Esophagus squamous epithelium (tissue), 5 donors: ENCODE measurements at regions of chr3 and their contacts with region 1.

Region 1: DNA sequence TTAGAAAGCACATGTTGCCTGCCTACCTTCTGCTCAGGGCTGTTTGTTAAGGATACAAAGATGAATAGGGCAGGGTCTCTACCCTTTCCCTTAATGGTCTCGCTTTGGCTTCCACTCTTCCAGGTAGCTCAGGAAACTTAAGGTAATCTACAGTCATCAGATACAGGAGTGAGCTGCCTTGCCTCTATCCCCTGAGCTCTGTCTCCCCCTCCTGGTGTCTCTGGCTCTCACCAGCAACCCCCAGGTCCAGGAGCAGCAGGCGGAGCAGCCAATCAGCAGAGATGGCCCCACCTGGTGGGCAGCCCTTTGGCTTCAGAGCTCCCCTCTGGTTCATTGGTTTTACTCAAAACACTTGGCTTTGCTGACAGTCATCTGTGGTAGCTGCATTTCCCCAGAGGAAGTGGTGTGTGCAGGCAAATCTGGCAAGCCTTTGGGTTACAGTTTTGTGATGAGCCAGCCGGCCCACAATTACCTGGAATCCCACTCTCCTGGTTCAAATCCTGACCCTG is 8.5 kb upstream of the CX3CR1 start:
- DNase-seq: peak; percentile 26
- H3K4me3 ChIP-seq: no peak overlapping the region
- H3K27ac ChIP-seq: no peak overlapping the region
- H3K4me1 ChIP-seq: peaks cover 0 to 8% (median 4%) of the 10 kb centered on the region in 3 donors
- H3K27me3 ChIP-seq: no peaks in the 10 kb centered on the region
- CTCF ChIP-seq: peak; percentile 63 to 94 (median 86)
- POLR2A ChIP-seq: no peak

Region 2: GRCh38 chr3:39107388-39108199 is 180.8 kb before region 1 on chr3 and contains the starts of genes GORASP1 and TTC21A:
- intact Hi-C with region 1: loop called (anchors 10 kb)
- DNase-seq: peak; percentile 23
- H3K4me3 ChIP-seq: peak within 1 kb of the TSS; percentile 74 to 99 (median 93)
- H3K27ac ChIP-seq: peak within 1 kb of the TSS; percentile 89 to 99 (median 96)
- H3K4me1 ChIP-seq: peaks cover 18 to 58% (median 24%) of the 10 kb centered on the region in 3 donors
- H3K27me3 ChIP-seq: no peaks in the 10 kb centered on the region
- CTCF ChIP-seq: peak in 1 of 6 experiments; percentile 3
- POLR2A ChIP-seq: peak in 3 of 4 donors; percentile 7 to 89 (median 76)
- total RNA-seq, gene GORASP1: 26.4 to 102 (median 43.8) TPM
- total RNA-seq, gene TTC21A: 1.6 to 2.9 (median 2.5) TPM

Region 3: GRCh38 chr3:39126532-39127071 is 161.8 kb before region 1 on chr3:
- intact Hi-C with region 1: loop called (anchors 5 kb)
- DNase-seq: no peak
- H3K4me3 ChIP-seq: no peak overlapping the region
- H3K27ac ChIP-seq: no peak overlapping the region
- H3K4me1 ChIP-seq: peaks cover 0 to 26% (median 0%) of the 10 kb centered on the region in 3 donors
- H3K27me3 ChIP-seq: no peaks in the 10 kb centered on the region
- CTCF ChIP-seq: peak in 5 of 6 experiments; percentile 38 to 54 (median 47)
- POLR2A ChIP-seq: no peak

Region 4: DNA sequence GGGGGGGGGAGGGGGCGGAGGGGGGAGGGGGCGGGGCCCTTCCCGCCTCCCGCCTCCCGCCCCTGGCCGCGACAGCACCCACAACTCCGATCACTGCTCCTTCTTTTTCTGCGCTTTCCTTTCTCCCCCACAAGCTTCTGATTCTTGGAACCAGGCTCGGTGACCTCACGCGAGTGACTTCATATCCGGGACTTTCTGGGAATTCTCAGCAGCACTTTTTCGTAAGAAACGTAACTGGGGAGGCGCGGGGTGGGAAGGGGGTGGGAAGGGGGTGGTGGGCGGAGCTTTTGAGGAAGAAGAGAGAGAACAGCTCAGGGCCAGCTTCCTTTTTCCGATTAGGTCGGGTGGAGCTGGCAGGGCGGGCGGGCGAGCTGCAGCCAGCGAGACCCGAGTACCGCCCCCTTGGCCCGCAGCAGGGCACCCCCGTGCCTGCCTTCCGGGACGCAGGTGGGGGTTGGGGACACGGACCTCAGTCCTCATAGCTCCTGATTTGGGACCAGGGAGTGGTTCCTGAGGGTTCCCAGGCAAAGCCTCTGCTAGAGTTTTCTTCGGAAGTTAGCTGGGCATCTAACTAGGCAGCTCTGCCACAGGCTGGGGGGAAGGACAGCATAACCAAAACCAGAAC is 110.5 kb before region 1 on chr3:
- intact Hi-C with region 1: no loop called
- DNase-seq: peak; percentile 52
- H3K4me3 ChIP-seq: peak overlapping the region; percentile 23 to 67 (median 50)
- H3K27ac ChIP-seq: peak overlapping the region; percentile 76 to 90 (median 88)
- H3K4me1 ChIP-seq: peaks cover 19 to 62% (median 34%) of the 10 kb centered on the region in 3 donors
- H3K27me3 ChIP-seq: no peaks in the 10 kb centered on the region
- CTCF ChIP-seq: no peak
- POLR2A ChIP-seq: peak in 2 of 4 donors; percentile 35 to 58

Region 5: GRCh38 chr3:39189959-39190269 is 98.4 kb before region 1 on chr3:
- intact Hi-C with region 1: loop called (anchors 5 kb)
- DNase-seq: no peak
- H3K4me3 ChIP-seq: no peak overlapping the region
- H3K27ac ChIP-seq: no peak overlapping the region
- H3K4me1 ChIP-seq: peaks cover 0 to 20% (median 0%) of the 10 kb centered on the region in 3 donors
- H3K27me3 ChIP-seq: no peaks in the 10 kb centered on the region
- CTCF ChIP-seq: peak; percentile 48 to 83 (median 76)
- POLR2A ChIP-seq: no peak